HepG2 (cell line): ENCODE measurements at regions of chr20 and their contacts with region 1.

Region 1: GRCh38 chr20:35619196-35620095 is 3.8 kb downstream of the SPAG4 start:
- DNase-seq: peak; percentile 94
- ATAC-seq: peak; percentile 69
- H3K4me3 ChIP-seq: peak overlapping the region; percentile 59 to 96 (median 67)
- H3K27ac ChIP-seq: peak overlapping the region; percentile 0
- H3K4me1 ChIP-seq: peaks cover 26% of the 10 kb centered on the region
- H3K27me3 ChIP-seq: peaks cover 0 to 7% of the 10 kb centered on the region in 2 experiments; a peak in 1 of 5 replicates
- CTCF ChIP-seq: peak; percentile 93
- EP300 ChIP-seq: peak in 1 of 2 experiments; percentile 32; a peak in 1 of 4 replicates
- POLR2A ChIP-seq: peak in 1 of 2 experiments; percentile 74; a peak in 2 of 4 replicates
- RAD21 ChIP-seq: peak; percentile 78

Region 2: GRCh38 chr20:35541783-35542588 is 77.5 kb before region 1 on chr20 and contains the start of gene ERGIC3:
- CTCF ChIA-PET with region 1: no interaction called
- POLR2A ChIA-PET with region 1: interaction called, 22 read pairs
- in situ Hi-C with region 1: no loop called
- intact Hi-C with region 1: loop called (anchors 5 kb)
- DNase-seq: peak; percentile 97
- ATAC-seq: peak; percentile 93
- H3K4me3 ChIP-seq: peak within 1 kb of the TSS; percentile 74 to 93 (median 79)
- H3K27ac ChIP-seq: peak within 1 kb of the TSS; percentile 85
- H3K4me1 ChIP-seq: peaks cover 29% of the 10 kb centered on the region
- H3K27me3 ChIP-seq: no peaks in the 10 kb centered on the region
- CTCF ChIP-seq: peak; percentile 43; the same call in 1 of the 2 replicates
- EP300 ChIP-seq: no peak
- POLR2A ChIP-seq: peak; percentile 82 to 92
- RAD21 ChIP-seq: no peak; the same call in 1 of the 2 replicates
- total RNA-seq, gene ERGIC3: 224 and 407 TPM in 2 replicates

Region 3: GRCh38 chr20:35568645-35569262 is 50.7 kb before region 1 on chr20:
- CTCF ChIA-PET with region 1: interaction called, 4 read pairs
- POLR2A ChIA-PET with region 1: interaction called, 4 read pairs
- in situ Hi-C with region 1: no loop called
- intact Hi-C with region 1: loop called (anchors 5 kb)
- DNase-seq: peak; percentile 78
- ATAC-seq: peak; percentile 95
- H3K4me3 ChIP-seq: no peak overlapping the region
- H3K27ac ChIP-seq: no peak overlapping the region
- H3K4me1 ChIP-seq: no peaks in the 10 kb centered on the region
- H3K27me3 ChIP-seq: no peaks in the 10 kb centered on the region
- CTCF ChIP-seq: peak; percentile 82
- EP300 ChIP-seq: no peak
- POLR2A ChIP-seq: no peak
- RAD21 ChIP-seq: peak; percentile 50; the same call in 1 of the 2 replicates

Region 4: DNA sequence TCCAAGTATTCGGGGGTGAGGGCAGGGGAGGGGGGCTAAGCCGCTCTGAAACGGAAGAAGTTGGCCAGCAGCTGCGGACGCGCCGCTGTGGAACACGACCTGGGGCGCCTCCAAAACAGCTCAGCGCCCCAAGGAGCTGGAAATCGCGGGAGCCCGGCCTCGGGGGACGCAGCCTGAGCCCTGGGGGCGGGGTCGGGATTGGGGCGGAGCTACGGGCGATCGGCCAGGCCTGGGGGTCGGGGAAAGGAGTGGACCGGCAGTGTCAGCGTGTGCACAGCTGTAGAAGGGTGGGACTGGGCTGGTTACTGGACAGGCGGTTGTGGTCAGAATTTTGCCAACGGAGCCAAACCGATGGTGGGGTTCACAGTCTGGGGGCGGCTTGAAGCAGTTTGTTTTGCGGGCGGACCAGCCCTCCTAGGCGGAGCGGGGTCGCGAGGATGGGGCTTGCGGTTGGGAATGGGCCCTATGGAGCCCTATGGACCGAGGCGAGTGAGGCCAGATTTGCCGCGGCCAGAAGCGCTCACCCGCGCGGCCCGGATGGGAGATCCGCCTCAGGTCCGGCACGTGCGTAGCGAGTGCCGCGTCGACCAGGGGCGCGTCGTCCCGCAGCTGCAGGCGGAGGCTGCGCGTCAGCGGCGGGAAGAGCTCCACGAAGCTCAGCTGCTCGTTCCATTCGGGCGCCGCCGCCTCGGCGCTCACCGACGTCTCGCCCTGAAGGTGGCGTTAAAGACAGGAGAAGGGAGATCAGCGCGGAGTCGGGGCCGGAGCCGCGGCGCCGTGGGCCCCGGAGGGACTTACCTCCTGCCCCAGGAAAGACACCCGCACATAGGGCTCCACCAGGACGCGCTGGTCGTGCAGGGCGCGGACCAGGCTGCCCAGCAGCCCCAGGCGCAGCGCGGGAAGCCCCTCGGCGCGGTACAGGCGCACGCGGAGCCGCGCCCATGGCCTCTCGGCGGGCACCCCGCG is 18.2 kb before region 1 on chr20:
- CTCF ChIA-PET with region 1: interaction called, 3 read pairs
- POLR2A ChIA-PET with region 1: interaction called, 17 read pairs
- in situ Hi-C with region 1: no loop called
- intact Hi-C with region 1: no loop called
- DNase-seq: peak; percentile 35
- ATAC-seq: peak; percentile 41
- H3K4me3 ChIP-seq: peak overlapping the region in 1 of 3 experiments; percentile 36; a peak in 1 of 6 replicates
- H3K27ac ChIP-seq: no peak overlapping the region
- H3K4me1 ChIP-seq: peaks cover 26% of the 10 kb centered on the region
- H3K27me3 ChIP-seq: peaks cover 3 to 23% of the 10 kb centered on the region in 2 experiments; a peak in 4 of 5 replicates
- CTCF ChIP-seq: peak; percentile 81
- EP300 ChIP-seq: no peak
- POLR2A ChIP-seq: no peak
- RAD21 ChIP-seq: peak; percentile 60

Region 5: GRCh38 chr20:35629427-35630145 is 10.1 kb after region 1 on chr20:
- CTCF ChIA-PET with region 1: no interaction called
- POLR2A ChIA-PET with region 1: interaction called, 24 read pairs
- in situ Hi-C with region 1: no loop called
- intact Hi-C with region 1: no loop called
- DNase-seq: no peak
- ATAC-seq: no peak
- H3K4me3 ChIP-seq: no peak overlapping the region
- H3K27ac ChIP-seq: no peak overlapping the region
- H3K4me1 ChIP-seq: peaks cover 14% of the 10 kb centered on the region
- H3K27me3 ChIP-seq: no peaks in the 10 kb centered on the region
- CTCF ChIP-seq: no peak
- EP300 ChIP-seq: no peak
- POLR2A ChIP-seq: no peak
- RAD21 ChIP-seq: no peak

Region 6: GRCh38 chr20:35635652-35636051 is 16.2 kb after region 1 on chr20:
- CTCF ChIA-PET with region 1: no interaction called
- POLR2A ChIA-PET with region 1: interaction called, 24 read pairs
- in situ Hi-C with region 1: no loop called
- intact Hi-C with region 1: no loop called
- DNase-seq: peak; percentile 76
- ATAC-seq: peak; percentile 76
- H3K4me3 ChIP-seq: no peak overlapping the region
- H3K27ac ChIP-seq: peak overlapping the region; percentile 68
- H3K4me1 ChIP-seq: peaks cover 34% of the 10 kb centered on the region
- H3K27me3 ChIP-seq: no peaks in the 10 kb centered on the region
- CTCF ChIP-seq: no peak
- EP300 ChIP-seq: no peak
- POLR2A ChIP-seq: no peak; a peak in 1 of 4 replicates
- RAD21 ChIP-seq: no peak

Region 7: GRCh38 chr20:35664544-35665221 is 45.2 kb after region 1 on chr20 and contains the starts of genes CPNE1 and RBM12:
- CTCF ChIA-PET with region 1: no interaction called
- POLR2A ChIA-PET with region 1: interaction called, 50 read pairs
- in situ Hi-C with region 1: loop called (anchors 5 kb)
- intact Hi-C with region 1: loop called (anchors 2 kb)
- DNase-seq: peak; percentile 96
- ATAC-seq: peak; percentile 92
- H3K4me3 ChIP-seq: peak within 1 kb of the TSS; percentile 76 to 99 (median 79)
- H3K27ac ChIP-seq: peak within 1 kb of the TSS; percentile 90
- H3K4me1 ChIP-seq: peaks cover 41% of the 10 kb centered on the region
- H3K27me3 ChIP-seq: no peaks in the 10 kb centered on the region; a peak in 1 of 5 replicates
- CTCF ChIP-seq: peak; percentile 30; the same call in 1 of the 2 replicates
- EP300 ChIP-seq: no peak; a peak in 1 of 4 replicates
- POLR2A ChIP-seq: peak; percentile 96 to 99
- RAD21 ChIP-seq: peak; percentile 71
- total RNA-seq, gene CPNE1: 431 and 439 TPM in 2 replicates
- total RNA-seq, gene RBM12: 104 and 111 TPM in 2 replicates